MCF 10A (cell line): ENCODE measurements at regions of chr12 and their contacts with region 1.

Region 1: DNA sequence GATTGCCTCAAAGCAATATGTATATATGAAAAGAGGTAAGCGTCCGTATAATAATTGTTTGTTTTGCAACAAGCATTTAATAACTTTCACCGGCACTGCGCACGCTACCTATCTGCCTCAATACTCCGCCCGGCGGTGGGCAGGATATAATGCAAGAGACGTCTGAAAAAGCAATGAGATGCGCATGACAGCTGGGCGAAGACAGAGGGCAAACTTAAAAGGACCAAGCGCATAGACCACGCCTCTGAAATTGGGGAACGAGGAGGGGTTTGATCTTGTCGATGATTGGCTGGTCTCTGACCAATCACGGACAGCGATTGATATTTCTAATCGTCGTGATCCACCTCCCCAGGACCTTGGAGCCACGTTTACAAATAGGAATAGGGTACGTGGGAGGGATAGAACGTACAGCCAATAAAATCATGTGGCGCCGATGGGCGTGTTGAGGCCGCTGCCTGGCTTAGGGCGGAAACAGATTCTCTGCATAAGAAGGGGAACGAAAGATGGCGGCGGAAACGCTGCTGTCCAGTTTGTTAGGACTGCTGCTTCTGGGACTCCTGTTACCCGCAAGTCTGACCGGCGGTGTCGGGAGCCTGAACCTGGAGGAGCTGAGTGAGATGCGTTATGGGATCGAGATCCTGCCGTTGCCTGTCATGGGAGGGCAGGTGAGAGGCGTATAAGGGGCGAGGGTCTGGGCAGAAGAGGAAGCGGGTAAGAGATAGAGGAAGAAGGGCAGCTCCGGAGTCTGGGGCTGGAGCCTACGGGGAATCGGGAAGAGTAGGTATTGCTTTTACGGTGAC is at the start of gene OS9:
- DNase-seq: peak; percentile 100
- H3K4me3 Mint-ChIP-seq: no peak within 1 kb of the TSS
- H3K27ac Mint-ChIP-seq: no peak within 1 kb of the TSS
- H3K4me1 Mint-ChIP-seq: no peaks in the 10 kb centered on the region
- H3K27me3 Mint-ChIP-seq: peaks cover 11% of the 10 kb centered on the region
- CTCF ChIP-seq: peak; percentile 48
- total RNA-seq, gene OS9: 125 and 173 TPM in 2 replicates

Region 2: GRCh38 chr12:57657744-57658143 is 36.1 kb before region 1 on chr12:
- CTCF ChIA-PET with region 1: interaction called, 17 read pairs
- POLR2A ChIA-PET with region 1: interaction called, 4 read pairs
- intact Hi-C with region 1: no loop called
- DNase-seq: peak; percentile 90
- H3K4me3 Mint-ChIP-seq: peak overlapping the region; percentile 36
- H3K27ac Mint-ChIP-seq: no peak overlapping the region
- H3K4me1 Mint-ChIP-seq: peaks cover 10% of the 10 kb centered on the region
- H3K27me3 Mint-ChIP-seq: no peaks in the 10 kb centered on the region
- CTCF ChIP-seq: no peak